A673 (cell line): ENCODE measurements at regions of chr1 and their contacts with region 1.

Region 1: GRCh38 chr1:64268653-64269557 is 65.5 kb downstream of the UBE2U start:
- DNase-seq: peak; percentile 95
- H3K4me3 ChIP-seq: no peak overlapping the region
- H3K27ac ChIP-seq: peak overlapping the region; percentile 82
- H3K4me1 ChIP-seq: peaks cover 34% of the 10 kb centered on the region
- H3K27me3 ChIP-seq: no peaks in the 10 kb centered on the region
- CTCF ChIP-seq: peak; percentile 76

Region 2: GRCh38 chr1:63710308-63710707 is 558.6 kb before region 1 on chr1:
- CTCF ChIA-PET with region 1: interaction called, 18 read pairs
- POLR2A ChIA-PET with region 1: no interaction called
- intact Hi-C with region 1: no loop called
- DNase-seq: no peak
- H3K4me3 ChIP-seq: no peak overlapping the region
- H3K27ac ChIP-seq: no peak overlapping the region
- H3K4me1 ChIP-seq: peaks cover 8% of the 10 kb centered on the region
- H3K27me3 ChIP-seq: no peaks in the 10 kb centered on the region
- CTCF ChIP-seq: no peak

Region 3: DNA sequence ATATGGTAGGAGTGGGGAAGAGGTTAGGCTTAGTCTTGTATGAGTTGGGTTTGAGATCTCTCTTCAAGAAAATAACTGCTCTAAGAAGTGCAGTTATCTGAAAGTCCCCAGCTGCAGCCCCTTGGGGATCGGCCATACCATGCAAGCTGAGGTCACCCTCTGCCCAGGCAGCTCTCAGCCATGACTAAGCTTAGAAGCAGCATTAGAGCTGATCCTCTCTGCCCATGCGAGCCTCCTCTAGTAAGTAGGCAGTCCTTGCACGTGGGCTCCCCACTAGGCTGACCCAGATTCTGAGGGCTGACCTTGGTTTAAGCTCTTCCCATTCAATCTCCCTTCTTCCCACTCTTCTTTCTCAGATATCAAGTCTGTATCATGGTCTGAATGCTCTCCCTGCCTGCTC is 186.4 kb before region 1 on chr1:
- CTCF ChIA-PET with region 1: no interaction called
- POLR2A ChIA-PET with region 1: no interaction called
- intact Hi-C with region 1: no loop called
- DNase-seq: no peak
- H3K4me3 ChIP-seq: no peak overlapping the region
- H3K27ac ChIP-seq: no peak overlapping the region
- H3K4me1 ChIP-seq: no peaks in the 10 kb centered on the region
- H3K27me3 ChIP-seq: no peaks in the 10 kb centered on the region
- CTCF ChIP-seq: no peak

Region 4: GRCh38 chr1:64363111-64363510 is 94.2 kb after region 1 on chr1:
- CTCF ChIA-PET with region 1: interaction called, 7 read pairs
- POLR2A ChIA-PET with region 1: interaction called, 4 read pairs
- intact Hi-C with region 1: loop called (anchors 1 kb)
- DNase-seq: peak; percentile 90
- H3K4me3 ChIP-seq: no peak overlapping the region
- H3K27ac ChIP-seq: peak overlapping the region; percentile 99
- H3K4me1 ChIP-seq: peaks cover 50% of the 10 kb centered on the region
- H3K27me3 ChIP-seq: no peaks in the 10 kb centered on the region
- CTCF ChIP-seq: no peak

Region 5: DNA sequence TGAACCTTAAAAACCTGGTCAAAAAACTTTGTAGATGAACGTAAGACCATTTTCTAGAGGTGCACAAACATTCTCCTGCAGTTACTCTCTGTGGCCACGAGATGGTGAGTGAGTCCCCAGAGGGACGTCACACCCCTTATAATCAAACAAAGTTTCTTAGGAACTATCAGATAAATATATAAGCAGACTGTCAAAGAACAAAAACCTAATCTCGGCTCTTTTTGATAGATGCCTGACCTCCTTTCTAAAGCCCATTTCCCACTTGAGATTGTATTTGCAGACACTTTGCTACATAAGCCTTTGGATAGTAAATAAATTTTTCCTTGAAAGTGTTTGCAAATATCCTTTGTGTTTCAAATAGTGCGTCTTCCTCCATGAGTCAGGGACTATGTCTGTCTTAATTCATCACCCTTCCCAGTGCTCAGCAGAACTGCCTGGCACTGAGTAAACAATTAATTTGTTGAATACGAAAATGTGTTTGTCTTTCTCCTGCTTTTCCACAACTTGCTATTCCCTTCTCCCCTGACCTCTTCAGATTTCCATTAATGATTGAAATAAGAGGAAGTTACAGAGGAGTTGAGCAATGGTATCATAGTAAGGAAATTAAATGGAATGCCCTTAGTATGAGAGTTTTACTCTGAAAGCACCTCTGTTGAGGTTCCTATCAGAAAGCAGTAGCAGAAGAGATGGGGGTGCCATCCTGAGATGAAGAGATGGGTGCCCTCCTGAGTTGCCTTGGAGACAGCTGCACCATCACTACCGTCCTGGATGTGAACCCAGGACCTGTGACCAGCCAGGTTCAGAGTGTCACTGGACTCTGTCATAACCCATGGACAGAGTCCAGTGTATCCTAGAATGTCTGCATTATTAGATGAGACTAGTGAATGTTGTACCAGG is 418.2 kb after region 1 on chr1:
- CTCF ChIA-PET with region 1: no interaction called
- POLR2A ChIA-PET with region 1: no interaction called
- intact Hi-C with region 1: loop called (anchors 5 kb)
- DNase-seq: peak; percentile 81
- H3K4me3 ChIP-seq: no peak overlapping the region
- H3K27ac ChIP-seq: peak overlapping the region; percentile 45
- H3K4me1 ChIP-seq: peaks cover 32% of the 10 kb centered on the region
- H3K27me3 ChIP-seq: no peaks in the 10 kb centered on the region
- CTCF ChIP-seq: peak; percentile 92

Region 6: GRCh38 chr1:64701886-64702285 is 433.0 kb after region 1 on chr1:
- CTCF ChIA-PET with region 1: no interaction called
- POLR2A ChIA-PET with region 1: no interaction called
- intact Hi-C with region 1: no loop called
- DNase-seq: no peak
- H3K4me3 ChIP-seq: no peak overlapping the region
- H3K27ac ChIP-seq: no peak overlapping the region
- H3K4me1 ChIP-seq: no peaks in the 10 kb centered on the region
- H3K27me3 ChIP-seq: no peaks in the 10 kb centered on the region
- CTCF ChIP-seq: no peak

Region 7: DNA sequence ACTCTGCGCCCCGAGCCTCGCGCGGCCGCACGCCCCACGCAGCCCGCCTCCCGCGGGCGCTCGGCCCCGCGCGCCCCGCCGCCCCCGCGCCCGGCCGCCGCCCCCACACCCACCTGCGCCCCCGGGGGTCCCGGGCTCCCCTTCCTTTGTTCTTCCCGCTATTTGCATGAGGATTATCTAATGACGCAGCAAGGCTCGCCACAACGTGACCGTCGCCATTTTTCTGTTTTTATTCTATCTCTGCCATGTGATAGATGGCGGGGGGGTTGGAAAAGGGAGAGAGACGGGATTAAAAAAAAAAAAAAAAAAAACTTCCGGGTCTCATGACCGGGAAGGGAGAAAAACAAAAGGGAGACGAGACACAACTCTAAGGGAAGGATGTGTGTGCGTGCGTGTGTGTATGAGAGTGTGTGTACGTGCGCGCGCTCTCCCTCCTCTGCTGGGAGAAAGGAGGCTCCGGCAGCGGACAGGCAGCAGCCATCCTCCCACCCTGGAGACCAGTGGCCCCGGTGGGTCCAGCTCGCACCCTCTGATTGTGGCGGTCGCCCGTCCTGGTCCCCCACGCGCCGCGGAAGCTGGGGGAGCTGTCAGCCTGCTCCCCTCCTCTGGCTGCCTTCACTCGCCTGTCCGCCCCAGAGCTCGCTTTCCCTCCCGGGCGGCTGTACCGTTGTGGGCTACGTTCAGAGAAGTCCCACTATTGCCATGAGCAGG is 798.7 kb after region 1 on chr1:
- CTCF ChIA-PET with region 1: no interaction called
- POLR2A ChIA-PET with region 1: no interaction called
- intact Hi-C with region 1: loop called (anchors 10 kb)
- DNase-seq: peak; percentile 94
- H3K4me3 ChIP-seq: peak overlapping the region; percentile 89
- H3K27ac ChIP-seq: peak overlapping the region; percentile 88
- H3K4me1 ChIP-seq: peaks cover 32% of the 10 kb centered on the region
- H3K27me3 ChIP-seq: no peaks in the 10 kb centered on the region
- CTCF ChIP-seq: no peak